Activated naive CD4-positive, alpha-beta T cell treated with anti-CD3 and anti-CD28 coated beads for 36 hours (primary cell): ENCODE measurements at regions of chr11 and their contacts with region 1.

Region 1: DNA sequence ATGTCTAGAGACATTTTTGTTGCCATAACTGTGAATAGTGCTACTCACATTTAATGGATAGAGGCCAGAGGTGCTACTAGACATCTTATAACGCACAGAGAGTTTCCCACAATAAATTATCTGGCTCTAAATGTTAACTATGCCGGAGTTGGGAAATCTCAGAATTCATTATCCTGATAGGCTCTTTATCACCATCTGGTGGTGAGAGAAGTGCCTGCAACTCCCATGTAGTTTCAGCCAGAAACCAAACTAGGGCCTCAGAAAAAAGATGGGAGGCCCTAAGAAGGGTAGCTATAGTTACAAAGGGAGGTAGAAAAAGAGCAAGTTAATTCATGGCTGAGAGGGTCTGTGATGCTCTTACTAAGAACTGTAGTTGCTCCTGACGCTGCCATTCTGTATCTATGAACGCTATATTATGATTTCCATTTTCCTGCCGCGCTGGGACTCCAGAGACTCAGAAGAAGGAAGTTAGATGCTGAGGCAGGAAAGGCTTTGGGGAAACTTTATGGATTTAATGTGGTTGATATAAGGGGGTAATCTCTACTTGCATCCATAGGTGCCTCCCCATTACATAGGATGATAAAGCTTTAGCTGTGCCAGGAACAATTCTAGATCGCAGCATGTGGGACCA is 22.9 kb upstream of the MRPL17 start:
- DNase-seq: peak; percentile 66
- H3K4me3 Mint-ChIP-seq: no peak overlapping the region
- H3K27ac Mint-ChIP-seq: no peak overlapping the region
- H3K4me1 Mint-ChIP-seq: peaks cover 17% of the 10 kb centered on the region
- H3K27me3 Mint-ChIP-seq: no peaks in the 10 kb centered on the region

Region 2: DNA sequence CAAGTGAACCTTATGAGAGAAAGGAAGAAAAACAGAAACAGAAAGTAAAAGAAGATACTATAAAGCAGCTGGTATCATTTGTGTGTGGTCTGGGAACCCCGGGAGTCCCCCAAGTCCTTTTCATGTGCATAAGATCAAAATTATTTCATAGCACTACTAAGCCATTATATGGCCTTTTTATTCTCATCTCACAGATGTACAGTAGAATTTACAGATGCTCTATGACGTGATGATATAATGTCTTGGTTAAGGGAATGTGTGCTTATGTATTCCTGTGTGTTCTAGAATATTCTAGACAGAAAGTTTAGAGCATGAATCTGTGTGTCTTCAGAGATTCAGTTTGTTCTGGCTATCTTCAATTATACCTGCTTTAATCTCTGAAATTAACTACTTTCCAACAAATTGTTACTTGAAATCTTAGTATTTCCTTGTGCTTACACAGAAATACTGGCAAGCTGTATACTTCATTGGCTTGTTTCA is 78.2 kb before region 1 on chr11:
- CTCF ChIA-PET with region 1: no interaction called
- intact Hi-C with region 1: no loop called
- DNase-seq: peak; percentile 55
- H3K4me3 Mint-ChIP-seq: no peak overlapping the region
- H3K27ac Mint-ChIP-seq: no peak overlapping the region
- H3K4me1 Mint-ChIP-seq: peaks cover 19% of the 10 kb centered on the region
- H3K27me3 Mint-ChIP-seq: no peaks in the 10 kb centered on the region

Region 3: DNA sequence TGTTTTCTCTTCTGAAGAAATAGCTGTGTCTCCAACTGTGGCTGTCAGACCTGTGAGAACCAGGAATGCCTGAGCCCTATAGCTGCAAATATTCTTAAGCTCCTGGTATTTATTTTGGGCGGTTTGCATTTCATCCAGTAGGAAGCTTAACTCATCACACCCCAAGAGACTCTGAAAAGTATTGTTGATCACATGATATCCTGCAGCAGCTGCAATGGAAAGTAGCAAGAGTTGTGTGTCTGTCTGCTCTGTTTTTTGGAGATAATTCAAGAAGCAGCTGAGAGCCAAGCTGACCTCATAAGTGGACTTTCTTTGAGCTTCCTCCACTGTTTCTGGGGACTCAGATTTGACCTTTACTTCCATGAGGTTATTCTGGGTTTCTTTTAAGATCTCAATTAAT is 13.6 kb after region 1 on chr11:
- CTCF ChIA-PET with region 1: interaction called, 19 read pairs
- intact Hi-C with region 1: no loop called
- DNase-seq: no peak
- H3K4me3 Mint-ChIP-seq: no peak overlapping the region
- H3K27ac Mint-ChIP-seq: no peak overlapping the region
- H3K4me1 Mint-ChIP-seq: peaks cover 63% of the 10 kb centered on the region
- H3K27me3 Mint-ChIP-seq: no peaks in the 10 kb centered on the region

Region 4: DNA sequence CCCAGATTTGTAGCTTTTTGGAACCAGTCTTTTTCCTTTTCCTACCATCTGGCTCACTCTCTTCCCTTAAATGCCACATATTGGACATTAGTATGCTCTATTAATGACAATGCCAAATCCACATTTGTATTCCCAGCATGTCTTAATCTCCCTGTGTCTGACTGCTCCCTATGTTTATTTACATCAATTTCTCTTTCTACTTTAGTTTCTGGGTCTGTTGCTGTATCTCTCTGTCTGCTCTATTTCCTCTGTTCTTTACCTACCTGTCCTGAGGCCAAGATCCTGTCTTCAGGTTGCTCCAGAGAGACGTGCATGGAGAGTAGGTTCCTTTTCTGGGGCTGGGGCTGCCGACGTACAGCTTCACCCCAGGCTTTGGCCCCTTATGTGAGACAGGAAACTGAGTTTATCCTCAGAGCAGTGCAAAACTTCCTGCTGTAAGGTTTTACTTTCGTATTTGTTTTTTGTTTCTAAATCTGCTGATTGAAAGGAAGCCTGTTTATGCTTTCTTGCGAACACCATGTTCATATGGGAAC is 40.1 kb after region 1 on chr11:
- CTCF ChIA-PET with region 1: interaction called, 10 read pairs
- intact Hi-C with region 1: no loop called
- DNase-seq: peak; percentile 60
- H3K4me3 Mint-ChIP-seq: no peak overlapping the region
- H3K27ac Mint-ChIP-seq: no peak overlapping the region
- H3K4me1 Mint-ChIP-seq: peaks cover 28% of the 10 kb centered on the region
- H3K27me3 Mint-ChIP-seq: no peaks in the 10 kb centered on the region

Region 5: DNA sequence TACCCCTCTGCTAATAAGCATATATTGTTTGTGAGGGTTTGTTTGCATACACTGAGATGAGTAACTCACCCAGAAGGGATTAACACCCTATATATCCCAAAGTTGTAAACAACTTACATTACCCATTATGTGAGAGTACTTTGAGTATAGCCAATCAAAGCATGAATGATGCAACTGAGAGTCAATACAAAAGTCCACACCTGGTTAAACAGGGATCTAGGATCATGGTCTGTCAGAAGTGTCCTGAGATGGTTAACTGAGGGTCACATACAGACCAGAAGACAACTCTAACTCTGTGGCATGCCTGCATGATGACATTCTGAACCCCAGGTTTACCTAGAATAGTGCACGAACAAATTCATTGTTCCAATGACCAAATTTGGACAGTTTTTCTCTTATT is 122.1 kb after region 1 on chr11:
- CTCF ChIA-PET with region 1: no interaction called
- intact Hi-C with region 1: no loop called
- DNase-seq: no peak
- H3K4me3 Mint-ChIP-seq: no peak overlapping the region
- H3K27ac Mint-ChIP-seq: no peak overlapping the region
- H3K4me1 Mint-ChIP-seq: no peaks in the 10 kb centered on the region
- H3K27me3 Mint-ChIP-seq: peaks cover 7% of the 10 kb centered on the region